ENCODE measurements at regions of chr1 and their contacts with region 1.

Region 1: GRCh38 chr1:43423672-43424550 is 29.8 kb downstream of the HYI start:
- DNase-seq: no peak

Region 2: GRCh38 chr1:43073490-43074230 is 350.3 kb before region 1 on chr1:
- in situ Hi-C with region 1: no loop called
- DNase-seq: peak; percentile 78

Region 3: DNA sequence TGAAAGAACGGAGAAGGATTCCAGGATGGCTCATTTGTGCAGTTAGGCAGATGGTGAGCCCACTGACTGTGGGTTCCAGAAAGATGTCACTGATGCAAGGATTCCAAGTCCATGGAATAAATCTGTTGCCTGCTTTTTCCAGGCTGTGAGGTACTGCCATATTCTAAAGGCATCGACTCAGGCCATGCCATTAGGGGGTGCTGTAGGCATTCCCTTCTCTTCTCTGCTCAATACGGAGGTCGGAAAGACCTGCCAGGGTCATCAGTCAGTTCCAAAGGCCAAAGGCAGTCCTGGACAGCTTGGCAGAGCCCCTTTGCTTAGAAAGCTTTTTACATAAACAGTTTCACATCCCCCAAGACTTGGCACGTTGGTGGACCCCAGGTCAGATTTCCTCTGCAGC is 185.8 kb before region 1 on chr1:
- in situ Hi-C with region 1: loop called (anchors 10 kb)
- DNase-seq: peak; percentile 69

Region 4: GRCh38 chr1:43719063-43719462 is 295.2 kb after region 1 on chr1:
- in situ Hi-C with region 1: no loop called
- DNase-seq: no peak

Region 5: GRCh38 chr1:43729816-43730463 is 306.0 kb after region 1 on chr1:
- in situ Hi-C with region 1: no loop called
- DNase-seq: no peak